ENCODE measurements at regions of chr6 and their contacts with region 1.

Region 1: DNA sequence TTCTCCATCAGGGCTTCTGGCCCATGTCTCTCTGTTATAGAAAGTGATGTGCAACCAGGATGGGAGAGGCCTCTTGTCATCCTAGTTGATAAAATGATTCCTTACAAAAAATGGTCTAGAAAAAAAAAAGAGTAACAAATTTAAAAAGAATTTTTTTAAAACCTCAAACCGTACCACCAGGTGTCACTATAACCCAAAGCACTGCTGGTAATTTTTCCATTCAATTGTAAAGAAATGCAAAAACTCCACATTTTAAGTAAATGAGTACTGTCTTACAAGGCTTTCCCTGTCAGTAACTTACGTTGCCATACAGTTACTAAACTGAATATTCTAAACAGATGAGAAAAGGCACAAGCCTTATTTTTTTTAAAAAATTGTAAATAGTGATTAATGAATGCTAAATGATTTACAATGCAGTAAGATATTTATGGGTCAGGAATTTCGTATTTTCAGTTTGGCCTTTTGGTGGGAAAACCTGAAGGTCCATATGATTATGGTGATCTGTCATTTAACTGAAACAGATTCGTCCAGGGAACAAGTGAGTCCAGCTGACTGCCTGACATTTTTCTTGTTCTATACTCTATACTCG is 95.4 kb downstream of the OGFRL1 start:
- DNase-seq: peak; percentile 64
- H3K4me3 ChIP-seq: no peak overlapping the region
- CTCF ChIP-seq: no peak

Region 2: GRCh38 chr6:71420693-71421328 is 36.8 kb after region 1 on chr6:
- in situ Hi-C with region 1: no loop called
- DNase-seq: peak; percentile 94
- H3K4me3 ChIP-seq: peak overlapping the region; percentile 85
- CTCF ChIP-seq: no peak

Region 3: DNA sequence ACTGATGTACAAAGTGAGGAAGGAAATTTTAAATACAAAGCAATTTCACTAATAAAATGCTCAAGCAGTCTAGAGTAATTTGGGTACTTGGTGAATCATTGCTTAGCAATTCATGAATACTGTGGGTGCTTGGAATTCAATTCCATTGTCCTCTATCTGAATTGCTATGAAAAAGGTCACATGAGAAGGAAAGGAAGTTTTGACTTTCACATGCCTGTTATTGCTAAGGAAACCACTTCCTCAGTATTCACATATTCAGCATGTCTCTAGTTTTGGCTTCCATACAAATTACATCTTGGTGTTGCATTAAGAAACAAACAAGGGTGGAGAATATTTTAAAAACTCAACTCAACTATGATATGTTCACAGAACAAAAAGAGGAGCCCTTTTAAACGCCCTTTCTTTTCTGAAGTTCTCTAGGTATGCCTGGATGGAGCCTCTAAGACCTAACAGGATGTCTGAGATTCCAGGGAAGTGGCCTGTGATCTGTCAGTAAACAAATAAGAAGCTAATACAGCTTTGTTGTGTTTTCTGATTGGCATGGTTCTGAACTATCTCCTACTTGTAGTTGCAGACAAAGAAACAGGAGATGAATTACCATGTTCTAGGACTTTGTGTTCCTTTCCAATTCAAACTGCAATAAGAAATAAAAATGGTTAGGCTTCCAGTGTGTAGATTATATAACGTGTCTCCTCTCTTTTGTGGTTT is 95.0 kb after region 1 on chr6:
- in situ Hi-C with region 1: no loop called
- DNase-seq: peak; percentile 96
- H3K4me3 ChIP-seq: no peak overlapping the region
- CTCF ChIP-seq: no peak

Region 4: GRCh38 chr6:71510057-71510713 is 126.2 kb after region 1 on chr6:
- in situ Hi-C with region 1: loop called (anchors 10 kb)
- DNase-seq: peak; percentile 79
- H3K4me3 ChIP-seq: no peak overlapping the region
- CTCF ChIP-seq: peak; percentile 67